Activated T-helper 1 cell treated with anti-CD3 and anti-CD28 coated beads, Interleukin-12 subunit alpha, Interleukin-12 subunit beta, Interleukin-2, Interleukin-4 antibody, amounts not matched to agents 30 ng/mL and 10 ng/mL and 1 ng/mL, durations not matched to agents 14 hours and 24 hours and 36 hours (primary cell): ENCODE measurements at regions of chr19 and their contacts with region 1.

Region 1: DNA sequence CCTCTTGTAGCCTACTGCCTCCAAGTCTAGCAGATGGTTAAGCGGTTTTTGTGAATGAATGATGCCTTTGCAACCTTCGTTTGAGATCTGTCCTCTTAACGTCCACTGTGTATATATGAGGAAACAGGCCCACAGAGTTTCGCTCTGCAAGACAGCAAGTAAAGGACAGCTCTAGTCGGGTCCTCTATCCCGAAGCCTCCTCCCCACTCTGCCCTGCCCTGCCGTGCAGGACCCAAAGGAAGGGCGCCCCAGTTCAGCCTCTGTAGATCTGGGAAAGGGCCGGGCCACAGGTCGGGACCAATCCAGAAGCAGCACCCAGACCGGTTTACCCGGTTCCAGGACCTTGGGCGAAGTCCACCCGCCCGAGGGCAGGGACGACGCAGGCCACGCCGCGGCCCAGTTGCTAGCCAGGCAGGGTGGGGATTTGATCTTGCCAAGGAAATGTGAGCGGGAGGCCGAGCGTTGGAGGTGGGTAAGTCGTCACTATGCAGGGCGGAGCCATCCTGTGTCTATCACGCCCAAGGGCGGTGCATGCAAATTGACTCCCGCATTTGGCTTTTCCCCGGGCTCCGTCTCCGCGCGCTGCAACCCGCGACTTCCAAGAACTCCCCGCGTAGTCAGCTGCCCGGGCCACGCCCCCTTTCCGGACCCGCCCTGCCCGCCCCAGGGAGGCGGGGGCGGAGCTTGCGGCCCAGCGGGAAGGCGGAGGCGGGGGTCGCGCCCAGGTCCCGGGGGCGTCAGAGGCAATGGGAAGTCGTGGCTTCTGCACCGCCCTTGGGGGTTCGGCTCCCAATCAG is 12.5 kb downstream of the IER2 start:
- DNase-seq: peak; percentile 90
- H3K4me3 Mint-ChIP-seq: peak overlapping the region; percentile 82
- H3K27ac Mint-ChIP-seq: peak overlapping the region; percentile 94
- H3K4me1 Mint-ChIP-seq: peaks cover 51% of the 10 kb centered on the region
- H3K27me3 Mint-ChIP-seq: no peaks in the 10 kb centered on the region

Region 2: DNA sequence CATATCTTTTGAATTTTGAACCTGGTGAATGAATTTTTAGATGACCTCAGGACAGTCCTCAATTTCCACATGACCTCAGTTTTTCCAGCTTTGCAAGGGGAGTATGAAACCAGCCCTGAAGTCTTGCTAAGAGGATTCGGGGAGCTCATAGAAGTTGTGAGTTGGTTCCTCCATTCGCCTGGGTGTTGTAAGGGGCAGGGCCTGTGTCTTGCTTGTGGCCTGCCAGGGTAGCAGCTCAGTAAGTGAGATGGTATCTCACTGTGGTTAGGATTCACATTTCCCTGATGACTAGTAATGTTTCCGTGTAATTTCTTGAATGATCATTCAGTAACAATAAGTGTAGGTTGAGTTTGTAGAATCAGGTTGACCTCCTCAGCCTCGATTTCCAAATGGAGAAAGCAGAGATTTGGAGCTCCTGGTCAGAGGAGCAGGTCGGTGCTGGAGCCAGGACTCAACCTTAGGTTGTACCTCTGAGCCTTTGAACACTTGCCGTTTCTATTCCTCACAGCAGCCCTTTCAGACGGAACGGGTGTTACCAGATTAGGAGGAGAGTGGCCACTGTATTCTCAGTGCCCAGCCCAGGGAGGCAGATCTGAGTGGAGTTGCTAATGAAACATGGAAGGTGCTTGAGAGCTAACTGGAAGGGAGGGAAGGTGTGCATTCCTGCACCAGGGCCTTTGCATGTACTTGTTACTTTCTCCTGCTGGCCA is 30.1 kb before region 1 on chr19:
- intact Hi-C with region 1: loop called (anchors 1 kb)
- DNase-seq: peak; percentile 46
- H3K4me3 Mint-ChIP-seq: peak overlapping the region; percentile 77
- H3K27ac Mint-ChIP-seq: peak overlapping the region; percentile 90
- H3K4me1 Mint-ChIP-seq: peaks cover 41% of the 10 kb centered on the region
- H3K27me3 Mint-ChIP-seq: no peaks in the 10 kb centered on the region

Region 3: GRCh38 chr19:13143135-13143534 is 19.6 kb before region 1 on chr19:
- intact Hi-C with region 1: no loop called
- DNase-seq: no peak
- H3K4me3 Mint-ChIP-seq: no peak overlapping the region
- H3K27ac Mint-ChIP-seq: no peak overlapping the region
- H3K4me1 Mint-ChIP-seq: peaks cover 6% of the 10 kb centered on the region
- H3K27me3 Mint-ChIP-seq: no peaks in the 10 kb centered on the region

Region 4: GRCh38 chr19:13181747-13182388 is 19.2 kb after region 1 on chr19:
- intact Hi-C with region 1: loop called (anchors 2 kb)
- DNase-seq: no peak
- H3K4me3 Mint-ChIP-seq: peak overlapping the region; percentile 51
- H3K27ac Mint-ChIP-seq: peak overlapping the region; percentile 71
- H3K4me1 Mint-ChIP-seq: peaks cover 18% of the 10 kb centered on the region
- H3K27me3 Mint-ChIP-seq: no peaks in the 10 kb centered on the region

Region 5: GRCh38 chr19:13195678-13196077 is 33.0 kb after region 1 on chr19:
- intact Hi-C with region 1: loop called (anchors 2 kb)
- DNase-seq: peak; percentile 32
- H3K4me3 Mint-ChIP-seq: no peak overlapping the region
- H3K27ac Mint-ChIP-seq: no peak overlapping the region
- H3K4me1 Mint-ChIP-seq: peaks cover 15% of the 10 kb centered on the region
- H3K27me3 Mint-ChIP-seq: no peaks in the 10 kb centered on the region

Region 6: DNA sequence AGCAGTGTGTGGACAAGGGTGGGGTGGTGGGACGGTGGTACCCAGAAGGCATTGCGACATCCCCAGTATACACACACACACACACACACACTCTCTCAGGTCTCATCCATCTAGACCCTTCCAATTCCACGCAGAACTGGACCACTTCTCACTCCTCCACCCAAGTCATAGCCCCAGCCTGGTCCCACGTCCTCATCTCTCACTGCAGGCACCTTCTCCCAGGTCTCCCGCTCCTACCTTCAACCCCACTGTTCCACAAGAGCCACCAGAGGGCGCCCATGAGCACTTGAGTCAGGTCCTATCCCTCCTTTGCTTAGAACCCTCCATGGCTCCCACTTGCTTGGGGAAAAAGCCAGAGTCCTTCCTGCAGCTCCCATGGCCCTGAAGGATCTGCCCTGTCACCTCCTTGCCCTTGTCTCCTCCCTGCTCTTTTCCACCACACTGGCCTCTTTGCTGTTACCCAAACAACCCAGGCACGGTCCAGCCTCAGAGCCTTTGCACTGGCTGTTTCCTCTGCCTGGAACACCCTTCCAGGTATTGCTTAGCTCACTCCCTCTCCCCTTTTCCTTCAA is 50.1 kb after region 1 on chr19:
- intact Hi-C with region 1: loop called (anchors 1 kb)
- DNase-seq: peak; percentile 59
- H3K4me3 Mint-ChIP-seq: no peak overlapping the region
- H3K27ac Mint-ChIP-seq: peak overlapping the region; percentile 41
- H3K4me1 Mint-ChIP-seq: peaks cover 24% of the 10 kb centered on the region
- H3K27me3 Mint-ChIP-seq: peaks cover 4% of the 10 kb centered on the region

Region 7: GRCh38 chr19:13262450-13262849 is 99.7 kb after region 1 on chr19:
- intact Hi-C with region 1: loop called (anchors 1 kb)
- DNase-seq: peak; percentile 8
- H3K4me3 Mint-ChIP-seq: no peak overlapping the region
- H3K27ac Mint-ChIP-seq: no peak overlapping the region
- H3K4me1 Mint-ChIP-seq: peaks cover 17% of the 10 kb centered on the region
- H3K27me3 Mint-ChIP-seq: peaks cover 17% of the 10 kb centered on the region

Region 8: GRCh38 chr19:13302526-13303270 is 140.0 kb after region 1 on chr19:
- intact Hi-C with region 1: no loop called
- DNase-seq: no peak
- H3K4me3 Mint-ChIP-seq: no peak overlapping the region
- H3K27ac Mint-ChIP-seq: no peak overlapping the region
- H3K4me1 Mint-ChIP-seq: no peaks in the 10 kb centered on the region
- H3K27me3 Mint-ChIP-seq: peaks cover 20% of the 10 kb centered on the region